ENCODE measurements at regions of chr6 and their contacts with region 1.

Region 1: GRCh38 chr6:158843751-158844683 is 24.8 kb upstream of the EZR start:
- DNase-seq: no peak
- ATAC-seq: peak; percentile 79
- H3K4me3 Mint-ChIP-seq: peak overlapping the region; percentile 28
- H3K27ac Mint-ChIP-seq: peak overlapping the region; percentile 76
- H3K4me1 Mint-ChIP-seq: peaks cover 35% of the 10 kb centered on the region
- H3K27me3 Mint-ChIP-seq: no peaks in the 10 kb centered on the region
- CTCF ChIP-seq: no peak

Region 2: GRCh38 chr6:158826801-158827573 is 17.0 kb before region 1 on chr6:
- CTCF ChIA-PET with region 1: no interaction called
- POLR2A ChIA-PET with region 1: interaction called, 13 read pairs
- intact Hi-C with region 1: loop called (anchors 1 kb)
- DNase-seq: no peak
- ATAC-seq: peak; percentile 87
- H3K4me3 Mint-ChIP-seq: peak overlapping the region; percentile 52
- H3K27ac Mint-ChIP-seq: peak overlapping the region; percentile 93
- H3K4me1 Mint-ChIP-seq: peaks cover 39% of the 10 kb centered on the region
- H3K27me3 Mint-ChIP-seq: no peaks in the 10 kb centered on the region
- CTCF ChIP-seq: no peak

Measured in activated B cell treated with CpG ODN at 0.5 μM for 24 hours (primary cell).